Prostate gland (tissue), 2 donors: ENCODE measurements at regions of chr19 and their contacts with region 1.

Region 1: DNA sequence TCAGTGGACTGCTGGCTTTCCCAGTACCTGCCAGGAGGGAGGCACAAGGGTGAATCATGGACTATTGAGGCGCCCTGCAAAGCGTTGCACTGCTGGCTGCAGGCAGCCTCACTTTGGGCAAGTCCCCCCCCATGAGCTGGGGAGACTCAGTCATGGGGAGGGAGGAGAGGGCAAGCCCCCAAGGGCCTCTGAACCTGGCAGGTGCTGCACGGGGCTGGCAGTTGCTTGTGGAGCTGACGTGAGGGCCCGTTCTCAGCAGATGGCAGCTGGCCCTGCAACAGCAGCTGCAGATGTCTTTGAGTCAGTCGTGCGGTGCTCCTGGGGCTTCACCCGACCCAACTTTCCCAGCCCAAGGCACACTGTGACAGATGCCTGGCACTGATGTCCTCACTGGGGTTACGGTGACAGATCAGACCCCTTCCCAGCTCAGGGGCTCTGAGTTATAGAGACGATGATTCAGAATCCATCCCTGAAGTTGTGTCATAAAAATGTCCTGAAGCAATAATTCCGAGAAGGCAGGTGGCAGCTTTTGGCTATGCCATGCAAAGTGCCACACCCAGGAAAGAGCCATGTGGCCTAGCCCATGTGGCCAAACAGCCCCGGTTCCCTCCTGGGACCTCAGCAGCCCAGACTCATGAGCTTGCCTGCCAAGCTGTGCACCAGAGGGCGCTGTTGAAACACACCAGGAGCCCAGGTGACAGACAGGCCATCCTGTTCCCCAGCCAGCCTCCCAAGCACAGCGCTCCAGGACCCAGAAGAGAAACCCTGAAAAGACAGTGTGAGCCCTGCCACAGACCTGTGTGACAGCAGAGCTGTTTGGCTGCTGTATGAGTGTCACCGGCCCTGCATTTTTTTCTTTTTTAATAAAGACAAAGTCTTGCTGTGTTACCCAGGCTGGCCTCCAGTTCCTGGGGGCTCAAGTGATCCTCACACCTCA is 53.6 kb upstream of the LDLR start:
- DNase-seq: peak; percentile 96
- H3K4me3 ChIP-seq: no peak overlapping the region
- H3K27ac ChIP-seq: peak overlapping the region; percentile 4 to 37
- H3K4me1 ChIP-seq: no peaks in the 10 kb centered on the region
- H3K27me3 ChIP-seq: no peaks in the 10 kb centered on the region
- CTCF ChIP-seq: peak; percentile 61 to 98 (median 94)
- POLR2A ChIP-seq: no peak

Region 2: DNA sequence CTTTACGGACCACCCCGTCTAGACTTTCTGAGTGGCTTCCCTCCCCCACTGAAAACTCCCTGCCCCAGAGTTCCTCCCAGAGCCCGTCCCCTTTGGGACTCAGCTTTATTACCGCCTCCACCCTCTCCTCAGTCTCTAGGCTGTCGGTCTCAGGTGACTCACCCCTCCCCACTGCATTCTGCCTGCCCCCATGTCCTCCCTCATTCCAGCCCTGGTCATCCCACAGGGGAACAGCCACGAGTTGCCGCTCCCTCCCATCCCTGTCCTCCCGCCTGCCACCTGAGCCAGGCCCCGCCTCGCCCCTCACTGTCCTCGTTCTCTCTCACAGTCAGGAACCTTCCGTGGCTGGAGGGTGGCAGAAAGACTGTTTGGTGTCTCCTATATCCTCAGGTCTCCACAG is 17.5 kb before region 1 on chr19:
- intact Hi-C with region 1: no loop called
- DNase-seq: peak; percentile 26
- H3K4me3 ChIP-seq: no peak overlapping the region
- H3K27ac ChIP-seq: peak overlapping the region; percentile 47 to 67
- H3K4me1 ChIP-seq: peaks cover 3% of the 10 kb centered on the region
- H3K27me3 ChIP-seq: no peaks in the 10 kb centered on the region
- CTCF ChIP-seq: no peak
- POLR2A ChIP-seq: no peak

Region 3: DNA sequence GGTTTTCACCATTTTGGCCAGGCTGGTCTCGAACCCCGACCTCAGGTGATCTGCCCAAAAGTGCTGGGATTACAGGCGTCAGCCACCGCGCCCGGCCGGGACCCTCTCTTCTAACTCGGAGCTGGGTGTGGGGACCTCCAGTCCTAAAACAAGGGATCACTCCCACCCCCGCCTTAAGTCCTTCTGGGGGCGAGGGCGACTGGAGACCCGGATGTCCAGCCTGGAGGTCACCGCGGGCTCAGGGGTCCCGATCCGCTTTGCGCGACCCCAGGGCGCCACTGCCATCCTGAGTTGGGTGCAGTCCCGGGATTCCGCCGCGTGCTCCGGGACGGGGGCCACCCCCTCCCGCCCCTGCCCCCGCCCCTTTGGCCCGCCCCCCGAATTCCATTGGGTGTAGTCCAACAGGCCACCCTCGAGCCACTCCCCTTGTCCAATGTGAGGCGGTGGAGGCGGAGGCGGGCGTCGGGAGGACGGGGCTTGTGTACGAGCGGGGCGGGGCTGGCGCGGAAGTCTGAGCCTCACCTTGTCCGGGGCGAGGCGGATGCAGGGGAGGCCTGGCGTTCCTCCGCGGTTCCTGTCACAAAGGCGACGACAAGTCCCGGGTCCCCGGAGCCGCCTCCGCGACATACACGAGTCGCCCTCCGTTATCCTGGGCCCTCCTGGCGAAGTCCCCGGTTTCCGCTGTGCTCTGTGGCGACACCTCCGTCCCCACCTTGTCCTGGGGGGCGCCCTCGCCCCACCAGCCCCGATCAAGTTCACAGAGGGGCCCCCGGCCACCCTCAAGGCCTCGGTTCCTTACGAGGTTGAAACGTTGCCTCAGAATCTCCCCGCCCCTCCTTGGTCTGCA is 54.6 kb after region 1 on chr19:
- intact Hi-C with region 1: loop called (anchors 10 kb)
- DNase-seq: peak; percentile 99
- H3K4me3 ChIP-seq: peak overlapping the region; percentile 64 to 77
- H3K27ac ChIP-seq: peak overlapping the region; percentile 98 to 99
- H3K4me1 ChIP-seq: peaks cover 7% of the 10 kb centered on the region
- H3K27me3 ChIP-seq: no peaks in the 10 kb centered on the region
- CTCF ChIP-seq: peak in 2 of 4 experiments; percentile 2 to 23
- POLR2A ChIP-seq: peak; percentile 97

Region 4: DNA sequence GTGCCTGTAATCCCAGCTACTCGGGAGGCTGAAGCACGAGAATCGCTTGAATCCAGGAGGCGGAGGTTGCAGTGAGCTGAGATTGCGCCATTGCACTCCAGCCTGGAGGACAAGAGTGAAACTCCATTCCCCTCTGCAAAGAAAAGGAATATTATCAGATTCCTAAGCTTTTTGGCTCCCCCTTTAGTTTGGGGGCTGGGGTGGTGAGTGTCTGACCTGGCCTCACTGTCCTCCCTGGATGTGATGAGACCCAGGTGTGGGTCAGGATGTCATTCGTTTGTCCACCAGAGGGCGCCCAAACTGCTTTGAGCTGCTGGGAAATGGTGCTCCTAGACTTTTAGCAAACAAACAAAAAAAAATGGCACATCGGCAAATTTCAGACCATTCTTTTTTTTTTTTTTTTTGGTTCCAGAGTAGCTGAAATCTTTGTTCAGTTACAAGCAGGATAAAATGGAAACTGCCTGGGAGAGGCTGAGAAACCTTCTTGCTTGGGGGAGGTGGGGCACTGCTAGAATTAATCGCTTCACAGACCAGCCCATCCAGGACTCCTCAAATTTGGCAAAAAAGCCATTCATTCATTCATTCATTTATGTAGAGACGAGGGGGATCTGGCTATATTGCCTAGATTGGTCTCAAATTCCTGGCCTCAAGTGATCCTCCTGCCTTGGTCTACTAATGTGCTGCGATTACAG is 90.4 kb after region 1 on chr19:
- intact Hi-C with region 1: loop called (anchors 2 kb)
- DNase-seq: peak; percentile 68
- H3K4me3 ChIP-seq: no peak overlapping the region
- H3K27ac ChIP-seq: no peak overlapping the region
- H3K4me1 ChIP-seq: no peaks in the 10 kb centered on the region
- H3K27me3 ChIP-seq: no peaks in the 10 kb centered on the region
- CTCF ChIP-seq: peak; percentile 72 to 74 (median 73)
- POLR2A ChIP-seq: no peak

Region 5: GRCh38 chr19:11203194-11204075 is 167.7 kb after region 1 on chr19:
- intact Hi-C with region 1: loop called (anchors 2 kb)
- DNase-seq: peak; percentile 34
- H3K4me3 ChIP-seq: no peak overlapping the region
- H3K27ac ChIP-seq: peak overlapping the region; percentile 74 to 85
- H3K4me1 ChIP-seq: no peaks in the 10 kb centered on the region
- H3K27me3 ChIP-seq: no peaks in the 10 kb centered on the region
- CTCF ChIP-seq: peak; percentile 79 to 94 (median 82)
- POLR2A ChIP-seq: no peak